CD8-positive, alpha-beta T cell (primary cell): ENCODE measurements at regions of chr6 and their contacts with region 1.

Region 1: GRCh38 chr6:52984247-52984646 is 10.8 kb downstream of the GSTA4 start:
- DNase-seq: peak in 7 of 9 experiments; percentile 9 to 84 (median 49)
- ATAC-seq: peak; percentile 88
- H3K4me3 ChIP-seq: peak overlapping the region in 1 of 2 experiments; percentile 23
- H3K4me3 Mint-ChIP-seq: peak overlapping the region; percentile 67
- H3K27ac ChIP-seq: no peak overlapping the region
- H3K27ac Mint-ChIP-seq: no peak overlapping the region
- H3K4me1 ChIP-seq: peaks cover 29% of the 10 kb centered on the region
- H3K4me1 Mint-ChIP-seq: peaks cover 34% of the 10 kb centered on the region
- H3K27me3 ChIP-seq: peaks cover 0 to 3% of the 10 kb centered on the region in 2 experiments
- H3K27me3 Mint-ChIP-seq: peaks cover 37% of the 10 kb centered on the region
- CTCF ChIP-seq: no peak

Region 2: GRCh38 chr6:52491203-52492069 is 492.8 kb before region 1 on chr6:
- CTCF ChIA-PET with region 1: no interaction called
- POLR2A ChIA-PET with region 1: no interaction called
- intact Hi-C with region 1: no loop called
- DNase-seq: no peak
- ATAC-seq: no peak
- H3K4me3 ChIP-seq: no peak overlapping the region
- H3K4me3 Mint-ChIP-seq: no peak overlapping the region
- H3K27ac ChIP-seq: no peak overlapping the region
- H3K27ac Mint-ChIP-seq: no peak overlapping the region
- H3K4me1 ChIP-seq: no peaks in the 10 kb centered on the region
- H3K4me1 Mint-ChIP-seq: no peaks in the 10 kb centered on the region
- H3K27me3 ChIP-seq: no peaks in the 10 kb centered on the region
- H3K27me3 Mint-ChIP-seq: no peaks in the 10 kb centered on the region
- CTCF ChIP-seq: no peak

Region 3: GRCh38 chr6:52881996-52882841 is 102.0 kb before region 1 on chr6:
- CTCF ChIA-PET with region 1: no interaction called
- POLR2A ChIA-PET with region 1: no interaction called
- intact Hi-C with region 1: loop called in 1 of 2 experiments (anchors 5 kb)
- DNase-seq: peak; percentile 23 to 81 (median 61)
- ATAC-seq: peak; percentile 99
- H3K4me3 ChIP-seq: peak overlapping the region; percentile 48 to 53
- H3K4me3 Mint-ChIP-seq: peak overlapping the region; percentile 86
- H3K27ac ChIP-seq: no peak overlapping the region
- H3K27ac Mint-ChIP-seq: peak overlapping the region; percentile 30
- H3K4me1 ChIP-seq: no peaks in the 10 kb centered on the region
- H3K4me1 Mint-ChIP-seq: peaks cover 4% of the 10 kb centered on the region
- H3K27me3 ChIP-seq: no peaks in the 10 kb centered on the region
- H3K27me3 Mint-ChIP-seq: no peaks in the 10 kb centered on the region
- CTCF ChIP-seq: peak; percentile 72

Region 4: GRCh38 chr6:53391170-53391569 is 406.9 kb after region 1 on chr6:
- CTCF ChIA-PET with region 1: no interaction called
- POLR2A ChIA-PET with region 1: no interaction called
- intact Hi-C with region 1: no loop called
- DNase-seq: no peak
- ATAC-seq: no peak
- H3K4me3 ChIP-seq: no peak overlapping the region
- H3K4me3 Mint-ChIP-seq: no peak overlapping the region
- H3K27ac ChIP-seq: no peak overlapping the region
- H3K27ac Mint-ChIP-seq: no peak overlapping the region
- H3K4me1 ChIP-seq: no peaks in the 10 kb centered on the region
- H3K4me1 Mint-ChIP-seq: no peaks in the 10 kb centered on the region
- H3K27me3 ChIP-seq: no peaks in the 10 kb centered on the region
- H3K27me3 Mint-ChIP-seq: no peaks in the 10 kb centered on the region
- CTCF ChIP-seq: no peak